HEK293 (cell line): ENCODE measurements at regions of chr6 and their contacts with region 1.

Region 1: DNA sequence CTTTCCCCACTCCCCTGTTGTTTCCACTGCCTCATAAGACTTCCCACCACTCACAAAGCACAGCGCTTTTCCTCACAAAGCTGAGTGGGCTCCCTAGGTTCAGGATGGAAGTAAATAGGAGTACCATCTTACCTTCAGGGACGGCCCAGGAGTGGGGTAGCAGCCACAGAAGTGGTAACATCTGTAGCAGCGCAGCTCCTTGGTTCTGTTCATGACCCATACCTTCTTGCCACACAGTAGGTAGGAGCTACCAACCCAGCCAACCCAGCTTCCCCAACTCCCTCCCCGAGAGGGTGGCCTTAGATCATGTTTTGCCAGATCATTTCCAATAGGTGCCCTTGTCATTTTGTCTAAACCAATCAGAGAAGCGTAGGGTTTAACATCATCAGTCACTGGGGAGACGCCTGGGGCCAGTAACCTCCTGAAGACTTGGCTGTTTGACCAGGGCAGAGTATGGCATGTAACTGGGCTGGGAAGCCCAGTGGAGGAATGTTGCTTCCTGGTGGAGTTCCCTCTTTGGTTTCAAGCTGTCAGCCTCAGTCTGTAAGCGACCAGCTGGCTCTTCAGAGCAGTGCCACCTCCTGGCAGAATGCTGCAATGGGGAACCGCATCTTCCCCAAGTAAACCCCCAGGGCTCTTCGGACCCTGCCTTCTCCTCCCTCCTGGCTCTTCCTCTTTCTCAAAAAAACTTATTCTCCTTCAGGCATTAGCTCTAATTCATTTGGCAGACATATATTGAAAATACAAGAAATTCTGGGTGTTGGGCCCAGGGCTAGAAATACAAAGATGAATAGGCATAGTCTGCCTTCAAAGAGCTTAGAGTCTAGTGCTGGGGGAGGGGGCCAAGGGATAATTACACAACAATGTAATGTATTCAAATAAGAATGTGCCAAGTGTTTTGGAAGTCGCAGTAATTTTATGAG is at the start of gene HLA-DMA:
- H3K4me3 ChIP-seq: no peak within 1 kb of the TSS
- H3K27ac ChIP-seq: no peak within 1 kb of the TSS
- H3K4me1 ChIP-seq: no peaks in the 10 kb centered on the region
- CTCF ChIP-seq: 0 out of 2 replicates have a peak, but pooled peaks have one; percentile 31

Region 2: DNA sequence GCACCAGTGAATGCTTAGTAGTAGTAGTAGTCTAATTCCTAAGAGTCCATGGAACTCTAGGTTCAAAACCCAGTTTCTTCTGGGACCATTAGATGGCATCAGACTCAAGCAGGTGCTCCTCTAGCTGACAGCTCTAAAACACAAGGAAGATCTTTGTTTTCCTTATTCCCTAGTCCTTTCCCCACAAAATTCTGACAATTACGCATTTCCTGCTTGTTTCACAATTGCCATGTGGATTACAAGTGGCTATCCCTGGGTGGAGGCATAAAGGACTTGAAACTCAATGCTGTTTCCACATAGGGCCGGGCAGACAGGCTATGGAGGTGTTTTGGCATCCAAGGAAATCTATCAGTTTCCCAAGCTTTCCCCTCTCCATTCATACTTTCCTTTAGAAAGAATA is 127.1 kb before region 1 on chr6:
- CTCF ChIA-PET with region 1: interaction called, 10 read pairs
- POLR2A ChIA-PET with region 1: no interaction called
- H3K4me3 ChIP-seq: no peak overlapping the region
- H3K27ac ChIP-seq: no peak overlapping the region
- H3K4me1 ChIP-seq: no peaks in the 10 kb centered on the region
- CTCF ChIP-seq: peak; percentile 51; the same call in 1 of the 2 replicates

Region 3: GRCh38 chr6:32885698-32886286 is 67.3 kb before region 1 on chr6:
- CTCF ChIA-PET with region 1: interaction called, 58 read pairs
- POLR2A ChIA-PET with region 1: no interaction called
- H3K4me3 ChIP-seq: no peak overlapping the region
- H3K27ac ChIP-seq: no peak overlapping the region
- H3K4me1 ChIP-seq: peaks cover 4% of the 10 kb centered on the region
- CTCF ChIP-seq: peak; percentile 28

Region 4: DNA sequence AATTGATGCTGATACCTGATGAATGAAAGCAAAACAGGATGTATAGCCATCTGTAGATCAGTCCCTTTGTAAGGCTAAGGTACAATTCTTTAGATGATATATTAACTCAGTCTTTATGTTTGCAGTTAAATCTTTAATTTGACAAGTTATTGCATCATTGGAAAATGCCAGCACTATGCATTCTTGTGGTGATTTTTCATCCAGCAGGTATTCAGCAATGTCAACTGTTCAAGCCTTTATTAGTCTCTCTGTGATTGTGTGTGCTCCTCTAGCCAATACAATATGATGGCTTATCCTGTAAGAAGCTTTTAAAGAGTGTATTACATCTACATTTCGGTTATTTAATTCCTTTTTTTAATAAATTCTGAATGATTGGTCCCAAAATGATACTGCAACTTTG is 46.5 kb before region 1 on chr6:
- CTCF ChIA-PET with region 1: interaction called, 18 read pairs
- POLR2A ChIA-PET with region 1: no interaction called
- H3K4me3 ChIP-seq: no peak overlapping the region
- H3K27ac ChIP-seq: no peak overlapping the region
- H3K4me1 ChIP-seq: peaks cover 11% of the 10 kb centered on the region
- CTCF ChIP-seq: no peak

Region 5: DNA sequence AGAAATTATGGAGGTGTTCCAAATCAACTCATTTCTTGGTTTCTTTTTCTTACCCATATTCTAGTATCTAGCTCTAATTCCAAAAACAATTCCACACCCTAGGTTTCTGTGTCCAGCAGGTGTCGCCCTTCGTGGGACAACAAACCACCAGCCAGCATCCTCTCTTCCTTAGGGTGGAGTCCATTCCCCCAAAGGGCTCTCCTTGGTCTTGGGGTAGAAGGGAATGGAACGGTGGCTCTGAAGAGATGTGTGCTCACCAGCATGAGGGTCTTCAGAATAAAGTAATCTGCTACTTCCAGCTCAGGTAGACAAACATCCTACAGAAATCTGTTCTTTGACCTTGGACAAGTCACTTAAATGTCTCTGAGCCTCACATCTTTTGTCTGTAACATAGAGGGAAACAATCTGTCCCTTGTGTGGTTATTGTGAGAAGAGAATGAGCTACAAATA is 19.4 kb before region 1 on chr6:
- CTCF ChIA-PET with region 1: interaction called, 109 read pairs
- POLR2A ChIA-PET with region 1: interaction called, 4 read pairs
- H3K4me3 ChIP-seq: no peak overlapping the region
- H3K27ac ChIP-seq: no peak overlapping the region
- H3K4me1 ChIP-seq: no peaks in the 10 kb centered on the region
- CTCF ChIP-seq: peak; percentile 37; the same call in 1 of the 2 replicates